Activated CD4-positive, alpha-beta T cell treated with anti-CD3 and anti-CD28 coated beads for 36 hours (primary cell): ENCODE measurements at regions of chr1 and their contacts with region 1.

Region 1: DNA sequence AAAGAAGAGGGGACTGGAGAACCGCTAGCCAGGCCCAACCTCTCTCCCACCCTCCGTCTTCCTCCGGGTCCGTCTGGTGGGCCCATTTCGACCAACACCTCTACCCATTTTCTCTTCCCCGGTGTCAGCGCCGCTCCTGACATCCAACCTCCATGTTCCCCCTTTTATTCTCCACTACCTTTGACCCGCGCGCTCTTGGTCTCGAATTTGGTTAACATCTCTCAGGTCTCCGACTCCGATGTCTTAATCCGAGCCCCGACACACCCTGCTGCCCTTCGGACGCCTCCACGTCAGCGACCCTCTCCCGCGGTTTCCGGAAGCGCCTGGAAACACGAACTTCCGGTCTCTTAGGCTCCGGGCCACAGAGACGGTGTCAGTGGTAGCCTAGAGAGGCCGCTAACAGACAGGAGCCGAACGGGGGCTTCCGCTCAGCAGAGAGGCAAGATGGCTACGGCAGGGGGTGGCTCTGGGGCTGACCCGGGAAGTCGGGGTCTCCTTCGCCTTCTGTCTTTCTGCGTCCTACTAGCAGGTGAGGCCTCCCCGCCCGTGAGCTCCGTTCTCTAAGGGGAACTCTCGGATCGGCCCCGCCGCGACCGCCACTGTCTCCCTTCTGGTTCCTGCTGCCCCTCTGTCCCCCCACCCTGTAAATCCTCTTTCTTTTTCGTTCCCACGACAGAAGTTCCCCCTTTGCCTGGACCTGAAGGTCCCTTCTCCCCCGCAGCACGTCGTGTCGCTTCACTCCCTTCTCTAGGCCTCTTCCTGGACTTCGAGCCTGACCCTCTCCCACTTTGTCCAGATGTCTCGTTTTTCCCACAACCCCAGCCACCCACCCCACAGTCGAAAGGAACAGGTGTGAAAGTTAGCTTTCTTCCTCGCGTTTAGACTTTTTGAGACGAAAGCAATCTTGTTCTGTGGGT is at the starts of genes COPA and NCSTN:
- DNase-seq: peak; percentile 94
- ATAC-seq: peak; percentile 99
- H3K4me3 Mint-ChIP-seq: peak within 1 kb of the TSS; percentile 100
- H3K27ac Mint-ChIP-seq: peak within 1 kb of the TSS; percentile 100
- H3K4me1 Mint-ChIP-seq: peaks cover 31% of the 10 kb centered on the region
- H3K27me3 Mint-ChIP-seq: no peaks in the 10 kb centered on the region
- total RNA-seq, gene COPA: 125 to 148 TPM
- total RNA-seq, gene NCSTN: 47.0 to 51.5 TPM

Region 2: DNA sequence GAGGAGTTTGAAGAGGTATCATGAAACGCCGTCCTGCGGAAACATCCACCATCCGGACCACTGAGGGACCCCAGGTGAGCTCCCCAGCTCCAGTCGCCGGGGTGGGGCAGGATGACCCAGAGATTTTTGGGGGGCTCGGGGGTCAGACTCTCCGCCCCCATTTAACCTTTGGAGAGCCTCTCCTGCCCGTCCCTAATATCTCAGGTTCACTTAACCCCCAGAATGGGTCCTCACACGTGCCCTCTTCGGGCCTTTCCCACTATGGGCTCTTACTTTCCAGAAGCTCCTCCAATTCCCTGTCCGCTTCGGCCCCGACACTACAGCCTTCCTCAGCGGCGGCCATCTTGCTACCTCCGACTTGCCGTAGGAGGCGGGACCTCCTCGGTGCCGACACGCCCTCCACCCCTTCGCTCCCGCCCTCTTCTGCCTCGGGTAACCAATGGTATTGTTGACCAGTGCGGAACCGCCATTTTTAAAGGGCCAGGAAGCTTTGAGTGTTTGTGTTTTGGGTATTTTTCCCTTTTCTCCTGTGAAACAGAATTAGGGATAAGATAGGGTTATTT is 58.3 kb before region 1 on chr1 and contains the start of gene PEX19:
- CTCF ChIA-PET with region 1: no interaction called
- POLR2A ChIA-PET with region 1: no interaction called
- intact Hi-C with region 1: loop called (anchors 1 to 2 kb)
- DNase-seq: peak; percentile 97
- ATAC-seq: peak; percentile 99
- H3K4me3 Mint-ChIP-seq: peak within 1 kb of the TSS; percentile 86
- H3K27ac Mint-ChIP-seq: peak within 1 kb of the TSS; percentile 94
- H3K4me1 Mint-ChIP-seq: peaks cover 18% of the 10 kb centered on the region
- H3K27me3 Mint-ChIP-seq: no peaks in the 10 kb centered on the region
- total RNA-seq, gene PEX19: 49.2 to 55.8 TPM

Region 3: DNA sequence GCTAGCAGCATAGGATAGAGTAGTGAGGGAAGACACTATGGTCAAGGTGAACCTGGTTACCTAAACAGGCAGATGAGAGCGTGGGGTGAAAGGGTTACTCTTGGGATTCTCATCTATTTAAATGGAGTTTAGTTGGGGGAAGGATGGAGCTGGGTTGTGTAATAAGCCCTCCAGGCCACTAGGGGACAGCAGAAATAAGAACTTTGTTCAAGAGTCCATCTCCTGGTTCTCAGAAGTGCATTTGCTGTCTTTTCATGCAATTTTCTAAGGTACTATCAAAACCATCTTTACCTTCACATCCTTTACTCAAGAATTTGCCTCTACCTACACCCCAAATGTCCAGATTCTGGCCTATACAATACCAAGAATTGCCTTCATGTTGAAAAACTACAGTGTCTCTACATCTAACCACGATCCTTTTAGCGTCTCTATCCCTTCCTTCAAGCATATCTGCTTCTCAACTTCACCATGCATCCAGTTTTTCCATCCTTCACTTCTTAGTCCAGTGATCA is 275.6 kb after region 1 on chr1:
- CTCF ChIA-PET with region 1: interaction called, 3 read pairs
- POLR2A ChIA-PET with region 1: no interaction called
- intact Hi-C with region 1: loop called in 1 of 2 experiments (anchors 1 kb)
- DNase-seq: peak; percentile 65
- ATAC-seq: no peak
- H3K4me3 Mint-ChIP-seq: no peak overlapping the region
- H3K27ac Mint-ChIP-seq: peak overlapping the region; percentile 71
- H3K4me1 Mint-ChIP-seq: peaks cover 60% of the 10 kb centered on the region
- H3K27me3 Mint-ChIP-seq: no peaks in the 10 kb centered on the region